Upper lobe of right lung (tissue), 1 donor: ENCODE measurements at regions of chr5 and their contacts with region 1.

Region 1: GRCh38 chr5:79133657-79134451 is 22.2 kb downstream of the BHMT start:
- DNase-seq: no peak
- ATAC-seq: peak; percentile 88
- H3K4me3 ChIP-seq: peak overlapping the region; percentile 26
- H3K27ac ChIP-seq: peak overlapping the region; percentile 55
- H3K4me1 ChIP-seq: peaks cover 6% of the 10 kb centered on the region
- H3K27me3 ChIP-seq: no peaks in the 10 kb centered on the region
- CTCF ChIP-seq: peak; percentile 64

Region 2: GRCh38 chr5:79020861-79021561 is 112.8 kb before region 1 on chr5:
- intact Hi-C with region 1: loop called (anchors 10 kb)
- DNase-seq: peak; percentile 67
- ATAC-seq: peak; percentile 93
- H3K4me3 ChIP-seq: no peak overlapping the region
- H3K27ac ChIP-seq: no peak overlapping the region
- H3K4me1 ChIP-seq: no peaks in the 10 kb centered on the region
- H3K27me3 ChIP-seq: no peaks in the 10 kb centered on the region
- CTCF ChIP-seq: peak; percentile 81

Region 3: GRCh38 chr5:79075646-79076426 is 58.0 kb before region 1 on chr5:
- intact Hi-C with region 1: no loop called
- DNase-seq: no peak
- ATAC-seq: no peak
- H3K4me3 ChIP-seq: no peak overlapping the region
- H3K27ac ChIP-seq: no peak overlapping the region
- H3K4me1 ChIP-seq: no peaks in the 10 kb centered on the region
- H3K27me3 ChIP-seq: no peaks in the 10 kb centered on the region
- CTCF ChIP-seq: no peak

Region 4: DNA sequence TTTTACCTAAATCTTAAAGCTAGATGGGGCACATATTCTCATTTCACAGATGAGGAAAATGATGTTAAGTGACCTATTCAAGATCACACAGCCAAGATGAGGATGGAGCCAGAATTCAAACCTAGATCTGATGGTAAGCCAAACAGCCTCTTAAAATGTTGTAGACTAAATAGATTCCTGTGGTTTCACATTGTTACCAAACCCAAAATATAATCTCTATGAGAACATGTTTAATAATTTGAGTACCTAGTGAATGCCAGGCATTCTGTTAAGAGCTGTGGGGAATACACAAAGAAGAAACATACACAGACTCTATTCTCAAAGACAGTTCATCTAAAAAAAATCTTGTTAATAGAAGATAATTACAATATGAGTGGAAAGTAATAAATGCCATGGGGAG is 354.9 kb after region 1 on chr5:
- intact Hi-C with region 1: no loop called
- DNase-seq: no peak
- ATAC-seq: peak; percentile 59
- H3K4me3 ChIP-seq: no peak overlapping the region
- H3K27ac ChIP-seq: no peak overlapping the region
- H3K4me1 ChIP-seq: no peaks in the 10 kb centered on the region
- H3K27me3 ChIP-seq: no peaks in the 10 kb centered on the region
- CTCF ChIP-seq: no peak